HepG2 (cell line): ENCODE measurements at regions of chr7 and their contacts with region 1.

Region 1: DNA sequence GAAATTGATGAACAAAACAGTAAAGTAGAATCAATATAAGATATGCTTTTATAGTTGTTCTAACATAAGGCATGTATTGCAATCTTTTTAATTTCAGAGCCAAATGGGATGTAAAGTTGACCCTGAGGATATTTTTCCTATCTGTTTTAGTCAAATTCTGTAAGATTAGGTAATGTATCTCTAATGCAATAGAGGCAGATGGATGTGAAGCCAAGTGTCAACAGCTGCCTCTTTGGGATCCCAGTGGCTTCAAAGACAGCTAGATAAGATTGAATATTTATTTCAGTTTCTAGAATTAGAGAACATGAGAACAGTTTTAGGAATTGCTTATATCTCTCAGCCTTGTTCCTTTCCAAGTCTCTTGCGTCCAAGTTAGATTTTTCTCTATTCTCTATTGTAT is 208.3 kb downstream of the DNAJB9 start:
- DNase-seq: no peak
- ATAC-seq: no peak
- H3K4me3 ChIP-seq: no peak overlapping the region
- H3K27ac ChIP-seq: no peak overlapping the region
- H3K4me1 ChIP-seq: no peaks in the 10 kb centered on the region
- H3K27me3 ChIP-seq: no peaks in the 10 kb centered on the region
- CTCF ChIP-seq: no peak
- EP300 ChIP-seq: no peak
- POLR2A ChIP-seq: no peak
- RAD21 ChIP-seq: no peak

Region 2: DNA sequence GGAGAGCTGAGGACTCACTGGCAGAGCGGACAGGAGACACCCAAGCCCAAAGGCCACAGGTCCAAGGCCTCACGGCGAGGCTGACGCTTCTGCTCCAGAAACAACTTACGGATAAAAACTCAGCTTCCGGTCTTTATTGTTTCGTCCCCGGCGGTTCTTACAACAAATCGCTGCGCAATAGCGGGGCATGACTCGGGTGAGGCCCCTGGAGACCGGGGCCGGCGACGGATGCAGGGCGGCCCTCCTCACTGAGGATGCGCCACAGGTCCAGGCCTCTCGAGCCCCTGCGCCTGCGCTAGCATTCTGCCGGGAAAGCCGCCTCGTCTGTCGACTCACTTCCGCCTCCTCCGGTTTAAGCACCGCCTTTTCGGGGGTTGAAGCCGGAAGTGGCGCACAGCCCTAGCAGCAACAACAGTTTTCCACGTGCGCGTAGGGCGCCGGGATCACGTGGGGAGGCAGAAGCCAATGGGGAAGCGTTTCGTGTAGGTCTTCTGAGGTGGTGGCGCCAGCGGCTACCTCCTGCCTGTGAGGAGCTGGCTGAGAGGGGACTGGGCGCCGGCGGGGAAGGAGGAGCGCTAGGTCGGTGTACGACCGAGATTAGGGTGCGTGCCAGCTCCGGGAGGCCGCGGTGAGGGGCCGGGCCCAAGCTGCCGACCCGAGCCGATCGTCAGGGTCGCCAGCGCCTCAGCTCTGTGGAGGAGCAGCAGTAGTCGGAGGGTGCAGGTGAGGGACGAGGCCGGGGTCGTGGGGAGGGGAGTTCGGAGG is 208.4 kb before region 1 on chr7 and contains the starts of genes DNAJB9 and THAP5:
- CTCF ChIA-PET with region 1: no interaction called
- POLR2A ChIA-PET with region 1: no interaction called
- in situ Hi-C with region 1: no loop called
- intact Hi-C with region 1: no loop called
- DNase-seq: peak; percentile 98
- ATAC-seq: peak; percentile 96
- H3K4me3 ChIP-seq: peak within 1 kb of the TSS; percentile 77 to 99 (median 97)
- H3K27ac ChIP-seq: peak within 1 kb of the TSS; percentile 95
- H3K4me1 ChIP-seq: peaks cover 47% of the 10 kb centered on the region
- H3K27me3 ChIP-seq: no peaks in the 10 kb centered on the region; a peak in 1 of 5 replicates
- CTCF ChIP-seq: 0 out of 2 replicates have a peak, but pooled peaks have one; percentile 30
- EP300 ChIP-seq: 0 out of 4 replicates have a peak, but pooled peaks of 1 of the 2 experiments have one; percentile 16
- POLR2A ChIP-seq: peak; percentile 92 to 93
- RAD21 ChIP-seq: no peak; the same call in 1 of the 2 replicates
- total RNA-seq, gene DNAJB9: 10.8 and 16.4 TPM in 2 replicates
- total RNA-seq, gene THAP5: 11.8 and 17.1 TPM in 2 replicates

Region 3: GRCh38 chr7:108802650-108803049 is 24.7 kb after region 1 on chr7:
- CTCF ChIA-PET with region 1: no interaction called
- POLR2A ChIA-PET with region 1: no interaction called
- in situ Hi-C with region 1: no loop called
- intact Hi-C with region 1: no loop called
- DNase-seq: no peak
- ATAC-seq: no peak
- H3K4me3 ChIP-seq: no peak overlapping the region
- H3K27ac ChIP-seq: no peak overlapping the region
- H3K4me1 ChIP-seq: no peaks in the 10 kb centered on the region
- H3K27me3 ChIP-seq: no peaks in the 10 kb centered on the region; a peak in 1 of 5 replicates
- CTCF ChIP-seq: no peak
- EP300 ChIP-seq: no peak
- POLR2A ChIP-seq: no peak
- RAD21 ChIP-seq: no peak

Region 4: GRCh38 chr7:108817173-108817572 is 39.2 kb after region 1 on chr7:
- CTCF ChIA-PET with region 1: no interaction called
- POLR2A ChIA-PET with region 1: no interaction called
- in situ Hi-C with region 1: no loop called
- intact Hi-C with region 1: loop called (anchors 1 kb)
- DNase-seq: no peak
- ATAC-seq: no peak
- H3K4me3 ChIP-seq: no peak overlapping the region
- H3K27ac ChIP-seq: no peak overlapping the region
- H3K4me1 ChIP-seq: no peaks in the 10 kb centered on the region
- H3K27me3 ChIP-seq: no peaks in the 10 kb centered on the region
- CTCF ChIP-seq: no peak
- EP300 ChIP-seq: no peak
- POLR2A ChIP-seq: no peak
- RAD21 ChIP-seq: no peak